Psoas muscle (tissue), 8 donors: ENCODE measurements at regions of chr7 and their contacts with region 1.

Region 1: DNA sequence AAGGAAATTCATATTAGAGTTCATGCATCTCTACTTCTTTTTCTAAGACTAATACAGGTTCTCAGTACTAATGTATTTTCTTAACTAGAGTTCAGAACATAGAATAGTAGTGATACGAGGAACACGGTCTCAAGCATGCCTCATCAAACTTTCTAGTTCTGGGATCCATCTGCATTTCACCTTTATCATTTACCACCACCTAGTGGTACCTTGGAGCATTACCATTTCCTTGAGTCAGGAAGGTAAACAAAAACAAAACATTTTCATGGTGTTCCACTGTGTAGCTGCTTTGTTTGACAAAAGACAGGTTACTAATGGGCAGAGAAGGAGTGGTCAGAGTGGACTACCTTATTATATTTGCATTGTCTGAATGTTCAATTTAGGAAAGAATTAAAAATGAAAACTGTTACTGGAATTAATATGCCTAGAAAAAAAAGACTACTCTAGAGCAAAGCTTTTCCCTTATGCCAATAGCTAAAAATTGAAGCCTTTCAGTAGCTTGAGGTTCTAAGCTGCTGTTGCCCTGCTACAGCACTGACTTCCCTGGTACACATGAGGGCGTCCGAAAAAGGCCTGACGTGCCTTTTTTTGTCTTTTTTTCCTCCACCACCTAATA is 44.5 kb downstream of the STARD3NL start:
- DNase-seq: no peak
- ATAC-seq: peak; percentile 75 to 95 (median 88)
- H3K4me3 ChIP-seq: no peak overlapping the region
- H3K27ac ChIP-seq: no peak overlapping the region
- H3K4me1 ChIP-seq: no peaks in the 10 kb centered on the region
- H3K27me3 ChIP-seq: no peaks in the 10 kb centered on the region
- CTCF ChIP-seq: peak; percentile 93

Region 2: GRCh38 chr7:38107486-38107893 is 115.1 kb before region 1 on chr7:
- intact Hi-C with region 1: loop called (anchors 1 to 2 kb)
- DNase-seq: peak; percentile 17 to 52
- ATAC-seq: peak; percentile 67 to 89 (median 74)
- H3K4me3 ChIP-seq: no peak overlapping the region
- H3K27ac ChIP-seq: no peak overlapping the region
- H3K4me1 ChIP-seq: no peaks in the 10 kb centered on the region
- H3K27me3 ChIP-seq: no peaks in the 10 kb centered on the region
- CTCF ChIP-seq: peak; percentile 80

Region 3: DNA sequence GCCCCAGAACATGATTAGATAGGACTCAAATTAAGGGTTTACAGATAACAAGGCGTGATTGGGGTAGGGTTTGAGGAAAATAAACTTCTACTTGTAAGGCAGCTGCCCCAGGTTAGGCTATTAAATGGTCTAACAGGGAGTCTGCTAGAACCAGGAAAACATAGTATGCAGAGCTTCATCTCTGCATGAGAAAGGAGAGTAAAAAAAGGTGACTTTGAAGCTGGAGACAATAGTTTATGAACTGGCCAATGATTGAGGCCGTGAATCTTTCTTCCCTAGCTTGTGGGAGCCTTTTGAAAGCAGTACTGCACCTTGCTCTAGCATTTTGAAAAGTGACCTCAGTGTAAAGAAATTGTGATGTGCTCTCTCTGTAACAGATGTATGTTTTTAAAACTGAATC is 93.0 kb before region 1 on chr7:
- intact Hi-C with region 1: no loop called
- DNase-seq: no peak
- ATAC-seq: no peak
- H3K4me3 ChIP-seq: no peak overlapping the region
- H3K27ac ChIP-seq: no peak overlapping the region
- H3K4me1 ChIP-seq: no peaks in the 10 kb centered on the region
- H3K27me3 ChIP-seq: no peaks in the 10 kb centered on the region
- CTCF ChIP-seq: no peak

Region 4: DNA sequence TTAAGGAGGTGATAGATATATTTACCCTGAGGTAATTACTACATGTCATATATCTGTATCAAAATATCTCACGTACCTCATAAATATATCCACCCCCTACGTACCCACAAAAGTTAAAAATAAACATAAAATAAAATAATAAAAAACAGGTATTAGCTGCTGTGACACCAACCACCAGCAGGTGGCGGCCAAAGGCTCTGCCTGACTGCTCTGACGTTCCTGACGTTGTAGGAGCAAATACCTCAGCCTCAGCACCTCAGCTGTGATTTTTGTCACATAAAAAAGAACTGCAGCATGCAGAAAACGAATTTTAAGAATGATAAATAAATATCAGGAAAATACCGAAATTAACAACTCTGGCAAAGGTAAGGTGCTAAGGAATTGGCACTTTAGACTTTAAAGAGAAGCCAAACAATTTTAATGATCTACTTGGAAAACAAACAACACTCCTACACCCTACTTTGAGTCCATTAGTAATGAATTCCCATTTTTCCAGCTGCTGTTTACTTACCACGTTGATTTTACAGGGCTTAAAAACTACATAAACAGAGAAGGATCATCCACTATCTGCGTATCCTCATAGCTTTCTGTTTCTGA is 176.2 kb after region 1 on chr7:
- intact Hi-C with region 1: no loop called
- DNase-seq: peak; percentile 27 to 59
- ATAC-seq: peak in 1 of 4 donors; percentile 74
- H3K4me3 ChIP-seq: no peak overlapping the region
- H3K27ac ChIP-seq: no peak overlapping the region
- H3K4me1 ChIP-seq: no peaks in the 10 kb centered on the region
- H3K27me3 ChIP-seq: no peaks in the 10 kb centered on the region
- CTCF ChIP-seq: peak; percentile 83